Heart left ventricle (tissue), 16 donors: ENCODE measurements at regions of chr7 and their contacts with region 1.

Region 1: DNA sequence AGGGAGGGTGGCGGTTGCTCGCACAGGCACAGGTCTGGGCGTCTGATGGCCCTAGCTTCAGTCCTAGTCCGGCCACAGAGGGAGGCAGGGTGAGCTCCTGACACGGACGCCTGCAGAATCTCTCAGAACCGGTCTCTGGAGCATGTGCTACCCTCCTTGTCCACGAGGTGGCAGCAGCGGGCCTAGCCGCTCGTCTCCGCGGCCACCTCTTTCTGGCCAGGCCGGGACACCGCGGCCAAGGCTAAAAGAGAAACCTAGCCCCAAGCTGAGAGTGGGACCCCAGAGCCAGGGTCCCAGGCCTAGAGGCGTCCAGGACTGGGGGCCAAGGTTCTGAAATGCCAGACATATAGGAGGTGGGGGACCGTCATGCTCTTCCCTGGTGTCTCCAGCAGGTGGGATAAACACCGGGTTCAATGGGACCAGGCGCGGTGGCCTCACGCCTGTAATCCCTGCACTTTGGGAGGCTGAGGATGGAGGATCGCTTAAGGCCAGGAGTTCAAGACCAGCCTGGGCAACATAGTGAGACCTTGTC is 3.2 kb upstream of the LAT2 start:
- DNase-seq: peak; percentile 82 to 94 (median 86)
- ATAC-seq: peak; percentile 62 to 87 (median 83)
- H3K4me3 ChIP-seq: peak overlapping the region in 8 of 12 donors; percentile 17 to 53 (median 25)
- H3K27ac ChIP-seq: no peak overlapping the region
- H3K4me1 ChIP-seq: peaks cover 0 to 18% (median 0%) of the 10 kb centered on the region in 12 donors
- H3K27me3 ChIP-seq: no peaks in the 10 kb centered on the region
- CTCF ChIP-seq: peak; percentile 96 to 99 (median 98)
- POLR2A ChIP-seq: no peak

Region 2: DNA sequence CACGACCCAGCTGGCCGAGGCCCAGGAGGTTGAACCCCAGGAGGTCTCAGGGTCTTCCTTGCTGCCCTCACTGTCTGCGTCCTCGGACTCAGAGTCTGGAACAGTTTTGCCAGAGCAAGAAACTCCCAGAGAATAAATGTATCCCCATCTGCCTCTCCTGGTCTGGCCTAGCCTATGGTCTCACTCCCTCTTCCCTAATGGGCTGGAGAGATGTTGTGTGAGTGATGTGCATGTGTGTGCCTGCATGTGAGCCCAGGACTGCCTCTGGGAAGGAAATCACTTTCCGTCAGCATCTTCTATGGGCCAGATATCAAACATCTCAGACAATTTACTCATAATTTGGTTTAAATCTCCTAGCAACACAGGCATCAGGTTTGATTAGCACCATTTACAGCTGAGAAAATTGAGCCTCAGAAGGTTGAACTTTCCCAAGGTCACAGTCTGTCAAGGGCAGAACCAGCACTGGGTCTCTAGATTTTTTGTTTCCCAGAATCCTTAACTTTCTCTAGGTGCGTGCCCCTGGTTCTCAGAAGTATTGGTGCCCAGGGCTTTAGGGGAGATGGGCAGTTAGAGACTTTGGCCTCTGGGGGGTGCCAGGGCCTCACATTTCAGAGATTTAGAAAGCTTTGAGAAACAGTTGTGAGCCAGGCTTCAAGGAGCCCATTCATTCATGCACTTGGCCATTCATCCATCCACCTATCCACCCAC is 340.8 kb before region 1 on chr7:
- intact Hi-C with region 1: loop called in 4 of 10 experiments (anchors 5 to 10 kb)
- DNase-seq: peak in 1 of 5 donors; percentile 57
- ATAC-seq: peak; percentile 39 to 77 (median 76)
- H3K4me3 ChIP-seq: no peak overlapping the region
- H3K27ac ChIP-seq: no peak overlapping the region
- H3K4me1 ChIP-seq: peaks cover 0 to 17% (median 8%) of the 10 kb centered on the region in 12 donors
- H3K27me3 ChIP-seq: no peaks in the 10 kb centered on the region
- CTCF ChIP-seq: peak; percentile 55 to 77 (median 68)
- POLR2A ChIP-seq: no peak

Region 3: GRCh38 chr7:74061840-74062539 is 144.7 kb before region 1 on chr7:
- intact Hi-C with region 1: loop called in 3 of 10 experiments (anchors 5 to 10 kb)
- DNase-seq: peak; percentile 80 to 91 (median 84)
- ATAC-seq: peak; percentile 87 to 97 (median 92)
- H3K4me3 ChIP-seq: peak overlapping the region in 5 of 12 donors; percentile 13 to 33 (median 19)
- H3K27ac ChIP-seq: peak overlapping the region; percentile 31 to 89 (median 77)
- H3K4me1 ChIP-seq: peaks cover 0 to 20% (median 7%) of the 10 kb centered on the region in 12 donors
- H3K27me3 ChIP-seq: no peaks in the 10 kb centered on the region
- CTCF ChIP-seq: no peak
- POLR2A ChIP-seq: no peak

Region 4: GRCh38 chr7:74068393-74069085 is 138.1 kb before region 1 on chr7:
- intact Hi-C with region 1: loop called in 4 of 10 experiments (anchors 1 to 10 kb)
- DNase-seq: peak in 2 of 5 donors; percentile 42 to 58
- ATAC-seq: peak in 1 of 4 donors; percentile 37
- H3K4me3 ChIP-seq: no peak overlapping the region
- H3K27ac ChIP-seq: no peak overlapping the region
- H3K4me1 ChIP-seq: no peaks in the 10 kb centered on the region
- H3K27me3 ChIP-seq: no peaks in the 10 kb centered on the region
- CTCF ChIP-seq: no peak
- POLR2A ChIP-seq: no peak